ENCODE measurements at regions of chr10 and their contacts with region 1.

Region 1: GRCh38 chr10:69800109-69800508 is 1.6 kb upstream of the COL13A1 start:
- DNase-seq: no peak
- ATAC-seq: peak; percentile 17 to 28
- H3K4me3 ChIP-seq: no peak overlapping the region
- H3K27ac ChIP-seq: no peak overlapping the region
- H3K4me1 ChIP-seq: peaks cover 10 to 12% of the 10 kb centered on the region in 2 donors
- H3K27me3 ChIP-seq: no peaks in the 10 kb centered on the region
- CTCF ChIP-seq: peak; percentile 21 to 69 (median 43)
- POLR2A ChIP-seq: no peak

Region 2: GRCh38 chr10:69733791-69734261 is 66.3 kb before region 1 on chr10:
- in situ Hi-C with region 1: no loop called
- intact Hi-C with region 1: loop called (anchors 2 kb)
- DNase-seq: no peak
- ATAC-seq: peak; percentile 46 to 51
- H3K4me3 ChIP-seq: no peak overlapping the region
- H3K27ac ChIP-seq: peak overlapping the region in 3 of 4 donors; percentile 30 to 62 (median 51)
- H3K4me1 ChIP-seq: peaks cover 72 to 83% of the 10 kb centered on the region in 2 donors
- H3K27me3 ChIP-seq: no peaks in the 10 kb centered on the region
- CTCF ChIP-seq: no peak
- POLR2A ChIP-seq: no peak

Region 3: DNA sequence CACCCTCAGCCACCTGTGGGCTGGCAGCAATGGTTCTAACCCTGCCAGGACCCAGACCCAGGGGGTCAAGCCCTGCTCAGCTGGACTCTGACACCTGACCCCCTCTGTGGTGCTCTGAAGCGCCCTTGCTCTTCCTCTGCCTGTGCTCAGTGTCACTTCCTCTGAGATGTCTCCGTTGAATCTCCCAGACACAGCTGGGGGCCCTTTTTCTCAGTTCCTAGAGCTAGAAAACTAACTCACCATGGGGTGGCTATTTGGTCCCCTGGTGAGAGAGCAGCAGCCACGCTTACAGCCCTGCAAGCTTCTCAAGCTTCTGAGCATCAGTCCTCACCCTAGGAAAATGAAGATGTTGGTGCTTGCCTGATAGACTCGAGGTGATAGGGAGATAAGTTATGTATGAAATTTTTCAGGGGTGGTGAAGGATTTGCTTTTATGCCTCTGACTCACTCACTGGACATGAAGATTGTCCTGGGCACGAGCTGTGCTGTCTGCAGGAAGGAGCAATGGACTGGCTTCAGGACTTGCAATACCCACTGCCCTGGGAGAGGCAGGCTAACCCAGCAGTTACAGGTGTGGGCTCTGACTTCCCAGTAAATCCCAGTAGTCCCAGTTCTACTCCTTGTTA is 31.2 kb after region 1 on chr10:
- in situ Hi-C with region 1: no loop called
- intact Hi-C with region 1: no loop called
- DNase-seq: no peak
- ATAC-seq: no peak
- H3K4me3 ChIP-seq: no peak overlapping the region
- H3K27ac ChIP-seq: no peak overlapping the region
- H3K4me1 ChIP-seq: no peaks in the 10 kb centered on the region
- H3K27me3 ChIP-seq: no peaks in the 10 kb centered on the region
- CTCF ChIP-seq: no peak
- POLR2A ChIP-seq: no peak

Region 4: GRCh38 chr10:69845574-69846292 is 45.6 kb after region 1 on chr10:
- in situ Hi-C with region 1: no loop called
- intact Hi-C with region 1: loop called (anchors 2 kb)
- DNase-seq: peak; percentile 71 to 79
- ATAC-seq: peak; percentile 83 to 85
- H3K4me3 ChIP-seq: peak overlapping the region in 2 of 4 donors; percentile 1 to 40
- H3K27ac ChIP-seq: peak overlapping the region; percentile 81 to 91 (median 84)
- H3K4me1 ChIP-seq: peaks cover 34 to 35% of the 10 kb centered on the region in 2 donors
- H3K27me3 ChIP-seq: no peaks in the 10 kb centered on the region
- CTCF ChIP-seq: no peak
- POLR2A ChIP-seq: no peak

Measured in gastrocnemius medialis (tissue), 4 donors.